ENCODE measurements at regions of chr12 and their contacts with region 1.

Region 1: DNA sequence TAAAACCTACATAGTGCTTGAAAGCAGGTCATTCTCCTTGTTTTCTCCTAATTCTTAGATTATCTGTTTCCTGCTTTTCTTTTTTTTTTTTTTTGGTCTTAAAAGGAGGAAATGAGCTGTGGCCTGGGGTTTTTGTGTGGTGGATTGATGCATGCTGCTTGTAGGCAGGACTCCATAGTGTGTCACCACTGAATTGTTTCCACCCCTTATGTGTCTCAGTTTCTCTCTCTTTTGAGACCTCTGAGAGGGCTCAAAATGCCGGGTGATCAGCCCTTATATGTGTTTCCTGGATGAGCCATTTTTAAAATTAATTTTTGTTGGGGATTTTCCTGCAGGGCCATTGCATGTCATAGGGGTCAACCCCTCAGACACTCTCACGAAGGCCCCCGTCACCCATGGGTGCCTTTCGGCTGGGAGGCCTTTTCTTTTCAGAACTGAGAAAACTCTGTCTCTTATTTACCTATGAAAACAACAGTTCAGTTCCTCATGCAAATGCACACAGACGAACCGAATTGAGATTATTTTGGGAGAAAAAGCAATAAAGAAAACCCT is 32.0 kb upstream of the LRRK2 start:
- DNase-seq: no peak
- ATAC-seq: no peak
- H3K4me3 ChIP-seq: no peak overlapping the region
- H3K27ac ChIP-seq: no peak overlapping the region
- H3K4me1 ChIP-seq: no peaks in the 10 kb centered on the region
- H3K27me3 ChIP-seq: no peaks in the 10 kb centered on the region
- CTCF ChIP-seq: no peak
- EP300 ChIP-seq: no peak
- POLR2A ChIP-seq: no peak
- RAD21 ChIP-seq: no peak

Region 2: GRCh38 chr12:39467432-39467870 is 725.3 kb before region 1 on chr12:
- CTCF ChIA-PET with region 1: no interaction called
- POLR2A ChIA-PET with region 1: no interaction called
- in situ Hi-C with region 1: no loop called
- intact Hi-C with region 1: no loop called
- DNase-seq: no peak
- ATAC-seq: no peak
- H3K4me3 ChIP-seq: no peak overlapping the region
- H3K27ac ChIP-seq: no peak overlapping the region
- H3K4me1 ChIP-seq: no peaks in the 10 kb centered on the region
- H3K27me3 ChIP-seq: no peaks in the 10 kb centered on the region
- CTCF ChIP-seq: no peak
- EP300 ChIP-seq: no peak
- POLR2A ChIP-seq: no peak
- RAD21 ChIP-seq: no peak

Region 3: GRCh38 chr12:40300490-40300889 is 107.7 kb after region 1 on chr12:
- CTCF ChIA-PET with region 1: no interaction called
- POLR2A ChIA-PET with region 1: no interaction called
- in situ Hi-C with region 1: no loop called
- intact Hi-C with region 1: loop called (anchors 10 kb)
- DNase-seq: no peak
- ATAC-seq: no peak
- H3K4me3 ChIP-seq: no peak overlapping the region
- H3K27ac ChIP-seq: no peak overlapping the region
- H3K4me1 ChIP-seq: no peaks in the 10 kb centered on the region
- H3K27me3 ChIP-seq: no peaks in the 10 kb centered on the region
- CTCF ChIP-seq: no peak
- EP300 ChIP-seq: no peak
- POLR2A ChIP-seq: no peak
- RAD21 ChIP-seq: no peak

Measured in K562 (cell line).